ENCODE measurements at regions of chr3 and their contacts with region 1.

Region 1: DNA sequence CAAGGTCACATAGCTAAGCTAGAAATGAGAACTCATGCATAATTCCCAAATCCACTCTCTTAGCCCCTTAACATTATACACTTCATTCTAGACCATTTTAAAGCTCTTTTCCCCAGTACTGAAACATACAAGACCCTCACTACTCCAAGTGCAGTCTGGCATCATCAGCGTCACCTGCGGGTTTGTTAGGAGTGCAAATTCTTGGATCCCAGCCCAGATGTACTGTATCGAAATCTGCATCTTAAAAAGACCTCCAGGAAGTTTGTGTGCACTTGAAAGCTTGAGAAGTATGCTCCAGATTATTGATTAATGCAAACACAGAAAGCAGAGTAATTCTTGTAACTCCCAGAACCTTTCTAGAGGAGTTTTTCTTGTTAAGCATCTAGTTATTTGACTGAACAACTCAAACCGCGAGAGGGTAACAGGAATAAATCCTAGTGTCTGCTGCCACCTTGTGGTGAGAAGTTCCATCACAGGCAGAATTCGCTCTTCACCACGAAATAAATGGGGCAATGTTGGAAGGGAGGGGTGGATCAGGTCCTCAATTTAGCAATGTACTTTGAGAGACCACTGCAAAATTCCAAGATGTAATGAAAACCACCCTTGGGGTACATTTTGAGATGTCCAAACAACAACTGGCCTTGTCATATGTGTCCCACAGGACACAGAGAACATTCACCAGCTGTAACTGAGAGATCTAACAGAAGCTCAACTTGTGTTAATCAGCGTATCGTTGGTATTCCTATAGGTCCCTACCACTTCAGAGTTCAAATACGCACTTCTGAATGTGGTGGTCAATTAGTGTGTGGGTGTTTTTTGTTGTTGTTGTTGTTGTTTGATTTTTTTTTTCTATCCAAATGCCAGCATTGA is 583 bp upstream of the C3orf49 start:
- DNase-seq: peak in 1 of 2 donors; percentile 70
- H3K4me3 ChIP-seq: no peak overlapping the region
- H3K27ac ChIP-seq: no peak overlapping the region
- H3K4me1 ChIP-seq: no peaks in the 10 kb centered on the region
- H3K27me3 ChIP-seq: no peaks in the 10 kb centered on the region
- CTCF ChIP-seq: peak; percentile 62 to 83 (median 79)

Region 2: DNA sequence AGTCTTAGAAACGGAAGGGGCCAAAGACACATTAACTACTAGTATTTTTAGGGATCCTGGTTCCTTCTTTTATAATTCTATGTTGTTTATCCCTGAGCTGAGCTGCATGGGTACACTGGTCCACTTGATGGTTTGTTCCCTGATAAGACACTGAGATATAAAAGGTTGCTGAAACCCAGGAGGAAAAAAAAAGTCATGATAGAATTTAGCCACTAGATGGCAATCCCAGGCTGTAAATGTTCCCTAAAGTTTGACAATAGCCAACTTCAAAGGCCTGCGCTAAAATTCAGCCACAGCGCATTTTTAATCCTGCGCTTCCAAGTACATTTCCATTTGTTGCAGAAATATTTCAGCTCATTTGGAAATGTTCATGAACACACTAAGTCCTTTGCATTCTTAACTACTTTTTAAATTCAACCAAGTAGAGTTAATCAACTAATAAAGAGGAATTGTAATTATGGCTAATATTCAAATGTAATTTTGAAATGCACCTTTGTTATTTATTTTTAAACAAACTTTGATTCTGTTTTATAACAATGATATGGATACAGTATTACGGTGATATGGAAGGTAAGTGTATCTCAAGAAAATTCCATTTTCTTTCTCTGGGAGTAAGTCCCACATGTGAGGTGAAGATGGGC is 1195.8 kb before region 1 on chr3:
- intact Hi-C with region 1: loop called (anchors 10 kb)
- DNase-seq: no peak
- H3K4me3 ChIP-seq: no peak overlapping the region
- H3K27ac ChIP-seq: no peak overlapping the region
- H3K4me1 ChIP-seq: no peaks in the 10 kb centered on the region
- H3K27me3 ChIP-seq: no peaks in the 10 kb centered on the region
- CTCF ChIP-seq: peak; percentile 36 to 64 (median 37)

Region 3: DNA sequence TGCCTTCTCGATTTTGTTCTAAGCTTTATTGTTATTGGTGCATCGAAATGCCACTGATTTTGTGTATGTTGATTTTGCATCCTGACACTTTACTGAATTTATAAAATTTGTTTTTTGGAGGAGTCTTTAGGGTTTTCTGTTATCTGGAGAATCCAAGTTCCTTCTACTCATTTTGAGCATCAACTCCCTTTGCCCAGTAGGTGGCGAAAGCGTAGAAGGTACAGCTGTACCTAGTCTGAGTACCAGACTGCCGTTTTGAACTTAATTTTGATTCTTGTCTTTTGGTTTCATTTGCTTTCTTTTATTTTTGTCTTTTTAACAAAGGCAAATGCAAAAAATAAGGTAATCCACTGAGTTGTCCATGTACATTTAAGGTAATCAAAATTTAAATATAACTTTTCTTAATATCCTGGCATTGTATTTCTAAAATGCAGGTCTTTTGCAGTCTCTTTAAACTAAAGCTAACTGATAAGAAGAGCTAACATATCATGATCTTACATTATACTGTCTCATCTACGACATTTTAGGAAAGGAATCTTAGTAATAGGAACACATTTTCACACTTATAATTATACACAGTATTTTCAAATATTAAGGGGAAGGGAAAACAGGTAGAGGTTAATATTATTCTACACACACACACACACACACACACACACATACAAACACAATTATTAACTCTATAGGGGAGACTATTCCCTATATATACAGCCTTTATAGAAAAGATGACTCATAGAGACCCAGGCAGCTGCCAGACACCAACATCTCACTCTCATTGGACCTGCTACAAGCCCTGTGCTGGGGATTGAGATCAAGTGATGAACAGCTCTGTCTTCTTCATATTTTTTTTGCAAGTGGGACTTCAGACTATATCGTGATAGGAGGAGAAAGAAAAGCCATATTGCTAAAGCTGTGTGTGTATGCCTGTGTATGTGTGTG is 468.7 kb before region 1 on chr3:
- intact Hi-C with region 1: loop called (anchors 1 kb)
- DNase-seq: no peak
- H3K4me3 ChIP-seq: no peak overlapping the region
- H3K27ac ChIP-seq: no peak overlapping the region
- H3K4me1 ChIP-seq: no peaks in the 10 kb centered on the region
- H3K27me3 ChIP-seq: no peaks in the 10 kb centered on the region
- CTCF ChIP-seq: peak; percentile 31 to 53 (median 38)

Region 4: GRCh38 chr3:63807961-63808565 is 10.5 kb before region 1 on chr3:
- intact Hi-C with region 1: no loop called
- DNase-seq: no peak
- H3K4me3 ChIP-seq: no peak overlapping the region
- H3K27ac ChIP-seq: no peak overlapping the region
- H3K4me1 ChIP-seq: no peaks in the 10 kb centered on the region
- H3K27me3 ChIP-seq: no peaks in the 10 kb centered on the region
- CTCF ChIP-seq: no peak